ENCODE measurements at regions of chr1 and their contacts with region 1.

Region 1: GRCh38 chr1:56831871-56832693 is 12.9 kb upstream of the FYB2 start:
- DNase-seq: no peak

Region 2: GRCh38 chr1:56508523-56508983 is 323.5 kb before region 1 on chr1:
- intact Hi-C with region 1: no loop called
- DNase-seq: peak; percentile 86

Region 3: GRCh38 chr1:56639210-56639609 is 192.9 kb before region 1 on chr1:
- intact Hi-C with region 1: no loop called
- DNase-seq: no peak

Region 4: DNA sequence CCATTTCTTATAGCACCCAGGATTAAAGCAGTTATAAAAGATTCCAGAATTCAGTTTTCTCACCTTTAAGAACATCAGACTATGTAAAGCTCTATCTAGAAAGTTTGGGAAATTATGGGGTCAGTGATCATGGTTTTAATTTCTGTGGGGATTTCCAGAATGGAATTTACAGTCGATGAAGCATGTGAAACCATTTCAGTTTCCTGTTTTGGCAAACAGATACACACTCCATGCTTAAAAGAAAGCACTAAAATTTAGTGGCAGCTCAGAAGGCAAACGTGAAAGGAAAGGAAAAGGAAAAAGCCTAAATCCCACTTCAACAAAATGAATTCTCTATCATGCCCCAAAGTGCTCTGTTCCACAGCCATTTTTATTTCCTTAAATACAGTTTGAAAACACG is 73.3 kb before region 1 on chr1:
- intact Hi-C with region 1: no loop called
- DNase-seq: no peak

Region 5: GRCh38 chr1:56967900-56968832 is 136.1 kb after region 1 on chr1:
- intact Hi-C with region 1: loop called (anchors 5 kb)
- DNase-seq: no peak

Region 6: DNA sequence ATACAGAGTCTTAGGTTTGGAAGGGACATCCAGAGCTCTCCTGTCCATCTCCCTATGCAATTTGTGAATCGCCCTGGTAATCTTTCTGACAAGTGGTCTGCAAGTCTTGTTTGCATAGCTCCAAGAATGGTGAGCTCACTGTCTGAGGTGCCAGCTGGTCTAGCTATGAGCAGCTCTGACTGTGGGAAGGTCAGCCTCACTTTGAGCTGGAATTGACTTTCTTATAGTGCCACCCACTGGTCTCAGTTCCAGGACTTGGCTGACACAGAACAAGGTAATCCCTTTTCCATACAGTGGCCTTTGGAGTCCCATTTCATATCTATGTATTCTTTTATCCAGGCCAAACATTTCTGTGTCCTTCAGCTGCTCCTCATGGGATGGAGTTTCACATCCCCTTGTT is 229.3 kb after region 1 on chr1:
- intact Hi-C with region 1: loop called (anchors 2 kb)
- DNase-seq: no peak

Region 7: GRCh38 chr1:57206038-57206437 is 374.0 kb after region 1 on chr1:
- intact Hi-C with region 1: no loop called
- DNase-seq: no peak

Region 8: GRCh38 chr1:57340334-57341070 is 508.4 kb after region 1 on chr1:
- intact Hi-C with region 1: loop called (anchors 5 kb)
- DNase-seq: no peak

Region 9: DNA sequence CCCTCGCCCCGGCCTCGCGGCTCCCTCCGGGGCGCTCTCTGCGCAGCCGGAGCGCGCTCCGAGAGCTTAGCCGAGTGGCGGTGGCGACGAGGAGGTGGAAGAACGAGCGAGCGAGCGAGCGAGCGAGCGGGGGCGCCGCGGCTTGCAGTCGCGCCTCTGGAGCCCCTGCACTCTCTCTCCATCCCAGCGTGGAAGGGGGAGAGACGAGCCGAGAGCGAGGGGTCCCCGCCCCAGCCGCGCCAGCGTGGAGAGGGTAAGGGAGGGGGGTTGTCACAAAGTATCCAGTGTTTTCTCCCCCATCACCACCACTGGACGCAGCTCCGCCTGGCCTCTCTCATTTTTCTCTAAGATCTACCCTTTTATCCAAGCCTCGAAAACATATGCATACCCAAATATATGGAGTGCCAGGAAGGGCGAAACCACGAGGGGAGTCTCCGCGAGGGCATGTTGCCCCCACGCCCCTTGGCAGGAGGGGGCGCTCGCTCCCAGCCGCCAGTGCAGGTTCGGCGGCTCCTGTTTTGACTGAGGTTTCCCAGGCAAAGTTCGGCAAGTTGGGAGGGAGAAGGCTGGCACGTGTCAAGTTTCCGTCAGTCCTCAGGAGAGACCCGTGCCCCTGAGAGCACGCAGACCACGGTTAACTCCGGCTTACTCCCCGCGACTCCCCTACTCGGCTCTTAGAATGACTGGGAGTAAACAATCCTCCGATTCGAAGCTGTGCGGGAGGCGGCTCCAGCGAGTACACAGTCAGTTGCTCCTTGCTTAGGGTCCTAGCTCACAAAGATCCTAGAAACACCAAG is 592.3 kb after region 1 on chr1:
- intact Hi-C with region 1: loop called (anchors 5 kb)
- DNase-seq: no peak

Region 10: DNA sequence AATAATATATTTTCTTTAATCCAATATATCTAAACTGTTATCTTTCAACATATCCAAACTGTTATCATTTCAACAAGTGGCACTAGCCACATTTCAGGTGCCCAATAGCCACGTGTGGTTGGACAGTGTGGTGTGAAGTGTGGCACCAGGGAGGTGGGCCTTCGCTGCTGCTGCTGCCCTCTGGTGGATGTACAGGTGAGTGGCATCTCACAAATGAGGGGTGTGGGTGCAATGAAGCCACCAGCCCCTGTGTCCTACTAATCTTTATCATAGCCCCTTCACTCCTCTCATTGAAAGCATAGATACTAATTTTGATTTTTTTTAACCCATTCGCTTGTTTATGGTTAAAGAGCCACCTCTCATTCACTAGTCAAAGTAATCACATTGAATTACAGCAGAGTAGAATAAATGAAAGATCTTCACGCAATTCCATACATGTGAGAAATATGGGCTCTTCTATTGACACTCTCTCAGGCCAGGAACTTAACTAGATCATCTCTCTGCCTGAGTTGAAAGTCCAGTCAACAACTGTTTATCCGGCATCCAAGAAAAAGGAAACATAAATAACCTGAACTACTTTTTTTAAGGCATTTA is 1215.3 kb after region 1 on chr1:
- intact Hi-C with region 1: loop called (anchors 5 kb)
- DNase-seq: no peak